ENCODE measurements at regions of chr6 and their contacts with region 1.

Region 1: GRCh38 chr6:80145509-80145908 is 39.0 kb downstream of the BCKDHB start:
- DNase-seq: no peak
- H3K4me3 ChIP-seq: no peak overlapping the region
- H3K27ac ChIP-seq: no peak overlapping the region
- H3K27me3 ChIP-seq: no peaks in the 10 kb centered on the region
- CTCF ChIP-seq: no peak

Region 2: DNA sequence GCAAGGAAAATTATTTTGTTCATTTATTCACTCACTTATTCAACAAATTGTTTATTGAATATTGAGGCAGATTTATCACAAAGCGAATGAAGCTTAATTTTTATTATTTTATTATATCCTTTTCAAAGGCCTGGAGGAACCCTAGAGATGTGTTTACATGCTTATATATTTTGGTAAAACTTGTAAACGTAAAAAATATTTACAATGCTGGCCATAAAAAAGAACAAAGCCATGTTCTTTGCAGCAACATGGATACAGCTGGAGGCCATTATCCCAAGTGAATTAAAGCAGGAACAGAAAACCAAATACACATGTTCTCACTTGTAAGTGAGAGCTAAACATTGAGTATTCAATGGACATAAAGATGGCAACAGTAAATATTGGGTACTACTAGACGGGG is 256.9 kb before region 1 on chr6:
- CTCF ChIA-PET with region 1: no interaction called
- POLR2A ChIA-PET with region 1: no interaction called
- DNase-seq: no peak
- H3K4me3 ChIP-seq: no peak overlapping the region
- H3K27ac ChIP-seq: no peak overlapping the region
- H3K27me3 ChIP-seq: no peaks in the 10 kb centered on the region
- CTCF ChIP-seq: no peak

Region 3: DNA sequence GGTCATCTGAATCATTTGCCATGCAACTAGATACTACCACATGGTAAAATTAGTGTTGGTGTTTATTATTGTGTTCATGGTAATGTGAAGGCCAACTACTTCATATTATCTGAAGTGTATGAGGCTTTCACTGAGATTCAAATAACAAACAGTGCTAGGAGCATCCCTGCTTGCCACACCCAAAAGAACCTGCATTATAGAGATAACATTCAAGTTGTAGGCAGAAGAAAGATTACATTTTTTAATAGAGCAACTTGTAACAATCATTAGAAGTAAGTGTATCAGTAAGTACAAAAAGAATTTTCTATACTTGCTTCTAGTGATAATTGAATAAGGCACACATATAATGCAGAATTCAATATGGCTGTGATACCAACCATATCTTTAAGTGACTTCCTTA is 10.7 kb after region 1 on chr6:
- CTCF ChIA-PET with region 1: no interaction called
- POLR2A ChIA-PET with region 1: interaction called, 11 read pairs
- DNase-seq: no peak
- H3K4me3 ChIP-seq: no peak overlapping the region
- H3K27ac ChIP-seq: no peak overlapping the region
- H3K27me3 ChIP-seq: no peaks in the 10 kb centered on the region
- CTCF ChIP-seq: no peak